ENCODE measurements at regions of chrX and their contacts with region 1.

Region 1: DNA sequence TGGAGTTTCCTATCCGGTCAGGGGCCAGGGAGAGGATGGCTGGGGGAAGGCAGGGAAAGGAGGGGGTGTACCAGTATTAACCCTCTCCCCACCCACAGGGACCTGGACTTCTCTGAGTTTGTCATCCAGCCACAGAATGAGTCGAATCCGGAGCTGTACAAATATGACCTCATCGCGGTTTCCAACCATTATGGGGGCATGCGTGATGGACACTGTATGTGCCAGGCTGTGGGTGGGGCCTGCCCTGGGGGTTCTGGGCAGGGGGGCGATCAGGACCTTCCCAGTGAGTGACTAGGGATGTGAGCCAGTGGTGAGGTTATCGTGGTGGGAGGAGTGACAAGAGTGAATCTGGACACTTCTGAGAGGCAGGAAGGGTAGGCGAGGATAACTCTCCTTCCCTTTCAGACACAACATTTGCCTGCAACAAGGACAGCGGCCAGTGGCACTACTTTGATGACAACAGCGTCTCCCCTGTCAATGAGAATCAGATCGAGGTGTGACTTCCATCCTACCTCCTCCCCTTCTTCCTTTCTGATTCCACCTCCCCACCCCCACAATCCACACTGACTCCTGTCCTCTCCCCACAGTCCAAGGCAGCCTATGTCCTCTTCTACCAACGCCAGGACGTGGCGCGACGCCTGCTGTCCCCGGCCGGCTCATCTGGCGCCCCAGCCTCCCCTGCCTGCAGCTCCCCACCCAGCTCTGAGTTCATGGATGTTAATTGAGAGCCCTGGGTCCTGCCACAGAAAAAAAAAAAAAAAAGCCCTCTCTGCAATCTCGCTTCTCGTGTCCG is 14.6 kb downstream of the USP11 start:
- DNase-seq: no peak
- H3K4me3 Mint-ChIP-seq: no peak overlapping the region
- H3K27ac Mint-ChIP-seq: peak overlapping the region; percentile 81
- H3K4me1 Mint-ChIP-seq: peaks cover 19% of the 10 kb centered on the region
- H3K27me3 Mint-ChIP-seq: no peaks in the 10 kb centered on the region

Region 2: GRCh38 chrX:47264483-47265173 is 17.2 kb after region 1 on chrX:
- intact Hi-C with region 1: loop called (anchors 1 kb)
- DNase-seq: no peak
- H3K4me3 Mint-ChIP-seq: no peak overlapping the region
- H3K27ac Mint-ChIP-seq: peak overlapping the region; percentile 85
- H3K4me1 Mint-ChIP-seq: peaks cover 21% of the 10 kb centered on the region
- H3K27me3 Mint-ChIP-seq: no peaks in the 10 kb centered on the region

Measured in activated T-helper 2 cell treated with anti-CD3 and anti-CD28 coated beads, Interferon-gamma antibody, Interleukin-2, Interleukin-4, amounts not matched to agents 10 μg/mL and 5 μg/mL and 100 μg/mL, durations not matched to agents 14 hours and 24 hours and 36 hours (primary cell).